ENCODE measurements at regions of chr15 and their contacts with region 1.

Region 1: DNA sequence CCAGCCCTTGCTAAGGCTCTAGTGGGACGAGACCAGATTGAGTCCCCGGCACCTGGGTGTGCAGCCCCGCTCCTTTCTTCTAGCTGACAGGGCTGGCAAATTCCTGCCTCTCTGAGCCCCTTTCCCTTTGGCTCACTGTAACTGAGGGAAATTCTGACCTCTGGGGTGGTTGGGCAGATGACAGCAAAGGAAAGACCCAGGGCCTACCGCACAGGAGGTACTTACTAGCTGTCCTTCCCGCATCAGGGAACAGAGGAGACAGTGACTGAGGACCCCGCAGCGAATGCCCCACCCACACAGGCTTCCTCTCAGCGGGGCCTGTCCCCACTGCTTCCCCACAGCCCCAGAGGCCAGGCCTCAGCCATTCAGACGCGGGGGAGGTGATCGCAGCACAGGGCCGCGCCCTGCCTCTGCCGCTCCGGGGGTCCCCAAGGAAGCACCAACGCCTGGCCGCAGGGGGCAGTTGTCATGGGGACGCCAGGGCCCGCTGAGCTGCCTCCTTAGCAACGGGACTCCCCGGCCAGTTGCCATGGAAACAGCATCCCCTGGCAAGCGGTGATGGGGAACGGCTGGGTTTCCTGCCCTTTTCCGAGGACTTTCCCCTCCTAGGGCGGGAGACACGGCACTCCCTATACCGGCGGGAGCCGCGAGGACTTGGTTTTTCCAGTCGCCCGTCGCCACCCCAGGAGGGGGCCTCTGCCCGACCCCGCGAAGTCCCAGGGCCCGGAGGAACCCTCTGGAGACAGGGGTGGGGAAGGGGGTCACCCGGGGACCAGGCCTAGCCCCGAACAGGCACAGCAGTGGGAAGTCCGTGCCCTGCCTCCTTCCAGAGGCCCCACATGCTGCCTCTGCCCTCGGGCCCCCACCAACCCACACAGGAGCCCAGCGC is 50.1 kb downstream of the HCN4 start:
- DNase-seq: no peak
- H3K4me3 Mint-ChIP-seq: no peak overlapping the region
- H3K27ac Mint-ChIP-seq: no peak overlapping the region
- H3K4me1 Mint-ChIP-seq: no peaks in the 10 kb centered on the region
- H3K27me3 Mint-ChIP-seq: peaks cover 74% of the 10 kb centered on the region
- CTCF ChIP-seq: no peak

Region 2: GRCh38 chr15:73593304-73594074 is 274.8 kb after region 1 on chr15:
- CTCF ChIA-PET with region 1: no interaction called
- intact Hi-C with region 1: no loop called
- DNase-seq: no peak
- H3K4me3 Mint-ChIP-seq: no peak overlapping the region
- H3K27ac Mint-ChIP-seq: no peak overlapping the region
- H3K4me1 Mint-ChIP-seq: no peaks in the 10 kb centered on the region
- H3K27me3 Mint-ChIP-seq: no peaks in the 10 kb centered on the region
- CTCF ChIP-seq: no peak

Region 3: DNA sequence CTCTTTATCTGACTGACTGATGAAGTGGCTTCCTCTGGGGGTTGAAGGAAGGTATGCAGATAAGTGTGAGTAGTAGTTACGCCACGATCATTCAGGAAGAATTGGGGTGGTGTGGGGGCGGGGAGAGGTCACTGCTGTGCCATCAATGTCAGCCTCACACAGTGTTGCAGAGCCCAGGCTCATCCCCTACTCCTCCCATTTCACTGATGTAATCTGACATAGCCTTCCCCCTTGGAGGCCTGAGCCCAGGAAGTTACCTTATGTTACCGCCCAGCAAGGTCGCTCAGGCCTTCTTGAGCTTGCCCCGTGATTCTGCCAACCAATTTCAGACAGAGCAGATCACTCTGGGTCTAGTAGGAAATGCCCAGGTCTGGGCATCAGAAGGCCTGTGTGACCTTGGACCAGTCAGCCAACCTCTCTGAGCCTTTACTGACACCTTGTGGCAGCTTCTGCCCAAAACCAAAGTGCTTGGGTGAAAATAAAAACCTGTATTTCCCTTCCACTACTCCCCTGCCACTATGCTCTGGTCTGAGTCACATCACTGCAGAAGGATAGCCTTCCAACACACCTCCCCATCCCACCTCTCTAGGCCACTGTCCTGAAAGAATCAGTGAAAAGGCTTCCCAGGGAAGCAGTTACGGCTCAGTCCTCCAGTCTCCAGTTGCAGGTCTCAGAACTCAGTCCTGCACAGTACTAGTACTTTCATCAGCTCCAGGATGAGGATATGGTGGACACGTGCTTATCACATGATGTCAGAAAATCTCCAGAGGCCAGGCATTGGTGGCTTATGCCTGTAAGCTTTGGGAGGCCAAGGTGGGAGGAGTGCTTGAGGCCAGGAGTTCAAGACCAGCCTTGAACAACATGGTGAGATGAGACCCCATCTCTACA is 462.6 kb after region 1 on chr15:
- CTCF ChIA-PET with region 1: no interaction called
- intact Hi-C with region 1: loop called (anchors 10 kb)
- DNase-seq: peak; percentile 30
- H3K4me3 Mint-ChIP-seq: no peak overlapping the region
- H3K27ac Mint-ChIP-seq: no peak overlapping the region
- H3K4me1 Mint-ChIP-seq: peaks cover 12% of the 10 kb centered on the region
- H3K27me3 Mint-ChIP-seq: peaks cover 45% of the 10 kb centered on the region
- CTCF ChIP-seq: peak; percentile 22

Measured in Calu3 (cell line).